Heart right ventricle (tissue), 16 donors: ENCODE measurements at regions of chr1 and their contacts with region 1.

Region 1: DNA sequence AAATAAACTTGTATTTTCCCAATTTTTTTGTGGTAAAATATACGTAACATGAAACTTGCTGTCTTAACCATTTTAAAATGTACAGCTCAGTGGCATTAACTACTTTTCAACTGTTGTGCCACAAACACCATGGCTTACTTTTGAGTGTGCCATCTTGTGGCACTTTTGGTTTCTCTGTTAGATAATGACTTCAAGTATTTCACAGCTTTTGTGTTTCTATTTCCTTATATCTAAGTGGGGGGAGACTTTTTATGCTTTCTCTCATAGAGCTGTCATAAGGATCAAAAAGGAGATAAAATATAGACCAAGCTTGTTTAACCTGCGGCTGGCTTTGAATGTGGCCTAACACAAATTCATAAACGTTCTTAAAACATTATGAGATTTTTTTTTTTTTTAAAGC is 44.3 kb downstream of the CDC14A start:
- DNase-seq: no peak
- ATAC-seq: no peak
- H3K4me3 ChIP-seq: no peak overlapping the region
- H3K27ac ChIP-seq: peak overlapping the region in 1 of 10 donors; percentile 73
- H3K4me1 ChIP-seq: peaks cover 0 to 75% (median 15%) of the 10 kb centered on the region in 9 donors
- H3K27me3 ChIP-seq: no peaks in the 10 kb centered on the region
- CTCF ChIP-seq: peak in 2 of 9 donors; percentile 24 to 25

Region 2: DNA sequence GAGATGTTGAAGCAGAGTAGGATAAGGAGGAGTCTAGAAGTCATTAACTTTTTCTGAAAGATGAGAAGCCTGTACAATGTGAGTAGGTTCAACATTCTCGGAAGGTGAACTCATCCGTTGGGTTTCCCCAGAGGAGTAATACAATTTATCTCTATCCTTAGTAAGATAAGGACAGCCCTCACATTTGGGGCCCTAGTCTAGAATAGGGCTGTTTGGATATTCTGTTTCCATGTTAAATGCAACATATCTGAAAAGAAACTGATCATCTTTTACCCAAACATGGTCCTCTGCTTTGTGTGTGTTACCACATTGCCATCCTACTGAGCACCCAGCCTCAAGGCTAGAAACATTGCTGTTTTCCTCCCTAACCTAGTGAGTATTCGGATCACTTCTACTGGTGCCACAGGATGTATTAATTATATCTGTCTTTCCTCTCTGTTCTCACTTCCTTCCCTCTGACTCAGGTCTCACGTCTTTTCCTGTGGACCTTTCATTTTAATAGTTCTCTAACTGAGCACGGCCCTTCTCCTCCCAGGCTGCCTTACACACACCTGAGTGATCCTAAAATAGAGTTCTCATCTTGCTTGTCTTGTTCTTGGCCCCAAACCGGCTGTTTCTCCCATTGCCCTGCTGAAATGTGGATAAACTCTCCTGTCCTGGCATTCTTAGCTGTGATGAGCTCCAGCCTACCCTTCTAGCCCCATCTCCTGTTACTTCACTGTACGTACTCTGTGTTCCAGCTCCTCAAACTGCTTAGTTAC is 47.3 kb after region 1 on chr1:
- intact Hi-C with region 1: loop called in 1 of 10 experiments (anchors 5 kb)
- DNase-seq: no peak
- ATAC-seq: peak in 7 of 8 donors; percentile 43 to 91 (median 59)
- H3K4me3 ChIP-seq: no peak overlapping the region
- H3K27ac ChIP-seq: peak overlapping the region in 8 of 10 donors; percentile 27 to 74 (median 55)
- H3K4me1 ChIP-seq: peaks cover 0 to 61% (median 18%) of the 10 kb centered on the region in 9 donors
- H3K27me3 ChIP-seq: no peaks in the 10 kb centered on the region
- CTCF ChIP-seq: peak in 1 of 9 donors; percentile 14